Naive thymus-derived CD8-positive, alpha-beta T cell (primary cell): ENCODE measurements at regions of chr6 and their contacts with region 1.

Region 1: DNA sequence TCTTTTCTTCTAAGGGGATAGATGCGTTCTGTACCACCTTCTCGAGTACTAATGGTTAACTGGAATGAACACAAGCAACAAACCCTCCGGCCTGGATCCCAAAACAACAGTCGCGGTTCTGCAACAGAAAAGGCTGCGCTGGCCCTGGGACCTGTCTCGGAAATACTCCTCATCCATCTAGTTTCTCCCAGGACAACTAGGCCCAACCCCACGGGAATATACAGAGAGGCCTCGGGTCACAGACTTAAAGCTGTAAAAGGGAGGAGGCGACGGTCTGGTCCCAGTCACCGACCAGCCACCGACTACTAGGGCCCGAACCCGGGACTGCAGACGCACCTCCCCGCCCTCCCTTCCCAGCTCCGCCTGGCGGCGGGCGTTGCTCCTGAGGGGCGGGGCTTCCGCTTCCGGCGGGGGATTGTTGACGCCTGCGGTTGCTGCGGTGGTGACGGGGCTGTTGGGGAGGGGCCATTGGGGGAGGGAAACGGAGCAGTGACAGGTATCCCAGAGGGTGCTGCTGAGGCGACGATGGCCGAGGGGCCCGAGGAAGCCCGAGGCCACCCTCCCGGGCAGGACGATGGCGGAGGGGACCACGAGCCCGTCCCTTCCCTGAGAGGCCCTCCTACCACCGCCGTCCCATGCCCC is at the start of gene FAM8A1:
- DNase-seq: peak; percentile 89 to 97 (median 94)
- ATAC-seq: peak; percentile 83 to 87
- H3K4me3 Mint-ChIP-seq: peak within 1 kb of the TSS; percentile 88 to 96 (median 92)
- H3K27ac Mint-ChIP-seq: peak within 1 kb of the TSS; percentile 84 to 96 (median 92)
- H3K4me1 Mint-ChIP-seq: peaks cover 15 to 47% (median 39%) of the 10 kb centered on the region in 4 donors
- H3K27me3 Mint-ChIP-seq: no peaks in the 10 kb centered on the region
- polyA plus RNA-seq, gene FAM8A1: 4.8 to 5.6 (median 4.9) TPM

Region 2: DNA sequence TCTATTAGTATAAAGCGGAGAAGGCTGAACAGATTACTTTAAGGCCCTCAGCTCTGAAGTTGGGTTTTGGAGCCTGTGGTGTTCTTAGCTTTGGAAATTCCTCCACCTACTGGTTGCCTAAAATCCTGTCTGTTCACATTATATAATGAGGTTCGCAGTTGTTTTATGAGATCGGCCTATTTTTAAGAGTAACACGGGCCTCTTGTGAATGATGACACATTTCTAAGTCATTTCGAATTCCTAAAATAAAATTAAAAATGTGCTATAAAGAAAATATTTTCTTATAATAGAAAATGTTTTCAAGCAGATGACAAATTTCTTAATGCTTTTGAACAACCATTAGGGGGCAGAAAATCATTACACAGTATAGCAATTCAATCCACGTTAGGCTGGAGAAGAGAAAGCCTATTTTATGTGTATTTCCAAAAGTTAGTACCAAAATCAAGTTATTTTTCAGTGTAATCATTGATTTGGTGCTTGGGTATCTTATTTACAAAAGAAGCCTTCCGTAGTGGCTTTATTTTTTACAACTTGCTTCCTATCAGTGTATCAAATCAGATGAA is 15.7 kb before region 1 on chr6:
- POLR2A ChIA-PET with region 1: interaction called, 35 read pairs
- DNase-seq: peak in 4 of 10 donors; percentile 35 to 61 (median 57)
- ATAC-seq: peak; percentile 69 to 73
- H3K4me3 Mint-ChIP-seq: peak overlapping the region in 1 of 10 donors; percentile 5
- H3K27ac Mint-ChIP-seq: peak overlapping the region in 2 of 10 donors; percentile 0 to 50
- H3K4me1 Mint-ChIP-seq: peaks cover 7 to 16% (median 10%) of the 10 kb centered on the region in 4 donors
- H3K27me3 Mint-ChIP-seq: peaks cover 0 to 8% (median 0%) of the 10 kb centered on the region in 5 donors

Region 3: DNA sequence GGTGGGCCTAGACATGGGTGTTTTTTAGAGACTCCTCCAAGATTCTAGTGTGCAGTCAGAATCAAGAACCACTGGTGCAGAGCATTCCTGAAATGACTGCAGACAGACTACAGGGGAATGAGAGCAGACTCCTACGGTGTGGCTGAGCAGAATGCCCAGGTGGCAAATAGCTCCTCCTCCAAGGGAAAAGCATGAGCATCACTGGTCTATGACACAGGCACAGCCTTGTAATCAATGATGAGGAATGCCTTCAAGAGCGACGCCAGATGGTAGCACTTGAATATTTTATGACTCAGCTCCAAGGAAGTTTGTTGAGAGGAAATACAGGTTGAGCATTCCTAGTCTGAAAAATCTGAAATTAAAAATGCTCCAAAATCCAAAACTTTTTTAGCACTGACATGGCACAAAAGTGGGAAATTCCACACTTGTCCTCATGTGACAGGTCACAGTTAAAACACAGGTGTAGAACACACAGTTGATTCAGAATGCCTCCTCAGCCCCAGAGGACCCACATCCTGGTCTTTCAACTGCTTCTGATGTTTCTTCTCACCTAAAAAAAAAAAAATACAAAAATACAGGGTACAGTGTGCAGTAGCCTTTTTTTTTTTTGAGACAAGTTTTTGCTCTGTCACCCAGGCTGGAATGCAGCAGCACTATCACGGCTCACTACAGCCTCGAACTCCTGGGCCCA is 10.5 kb before region 1 on chr6:
- POLR2A ChIA-PET with region 1: interaction called, 35 read pairs
- DNase-seq: peak in 9 of 10 donors; percentile 9 to 76 (median 51)
- ATAC-seq: peak; percentile 98 to 99
- H3K4me3 Mint-ChIP-seq: peak overlapping the region in 8 of 10 donors; percentile 7 to 83 (median 39)
- H3K27ac Mint-ChIP-seq: peak overlapping the region in 9 of 10 donors; percentile 58 to 92 (median 84)
- H3K4me1 Mint-ChIP-seq: peaks cover 7 to 28% (median 17%) of the 10 kb centered on the region in 4 donors
- H3K27me3 Mint-ChIP-seq: no peaks in the 10 kb centered on the region

Region 4: DNA sequence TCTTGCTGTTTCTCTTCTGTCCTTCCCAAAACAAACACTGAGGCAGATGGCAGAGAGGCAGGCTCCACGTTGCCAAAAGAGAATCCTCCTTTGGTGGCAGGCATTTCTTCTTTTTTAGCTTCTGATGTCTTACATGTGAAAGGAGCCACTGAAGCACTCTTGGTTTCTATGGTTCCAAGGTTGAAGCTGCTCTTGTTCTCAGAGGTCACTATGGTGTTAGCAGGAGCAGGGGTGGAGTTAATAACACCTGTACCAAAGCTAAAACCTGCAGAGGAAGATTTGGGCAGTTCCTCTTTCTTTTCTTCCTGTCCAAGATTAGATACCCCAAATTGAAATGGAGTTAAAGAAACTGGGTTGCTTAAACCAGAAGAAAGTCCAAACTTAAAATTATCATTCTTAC is 28.9 kb after region 1 on chr6:
- POLR2A ChIA-PET with region 1: interaction called, 10 read pairs
- DNase-seq: no peak
- ATAC-seq: no peak
- H3K4me3 Mint-ChIP-seq: no peak overlapping the region
- H3K27ac Mint-ChIP-seq: peak overlapping the region in 7 of 10 donors; percentile 3 to 78 (median 50)
- H3K4me1 Mint-ChIP-seq: peaks cover 12 to 49% (median 44%) of the 10 kb centered on the region in 4 donors
- H3K27me3 Mint-ChIP-seq: no peaks in the 10 kb centered on the region

Region 5: GRCh38 chr6:17640477-17640917 is 40.5 kb after region 1 on chr6:
- POLR2A ChIA-PET with region 1: no interaction called
- DNase-seq: no peak
- ATAC-seq: no peak
- H3K4me3 Mint-ChIP-seq: no peak overlapping the region
- H3K27ac Mint-ChIP-seq: peak overlapping the region in 4 of 10 donors; percentile 26 to 71 (median 46)
- H3K4me1 Mint-ChIP-seq: peaks cover 3 to 13% (median 8%) of the 10 kb centered on the region in 4 donors
- H3K27me3 Mint-ChIP-seq: no peaks in the 10 kb centered on the region

Region 6: DNA sequence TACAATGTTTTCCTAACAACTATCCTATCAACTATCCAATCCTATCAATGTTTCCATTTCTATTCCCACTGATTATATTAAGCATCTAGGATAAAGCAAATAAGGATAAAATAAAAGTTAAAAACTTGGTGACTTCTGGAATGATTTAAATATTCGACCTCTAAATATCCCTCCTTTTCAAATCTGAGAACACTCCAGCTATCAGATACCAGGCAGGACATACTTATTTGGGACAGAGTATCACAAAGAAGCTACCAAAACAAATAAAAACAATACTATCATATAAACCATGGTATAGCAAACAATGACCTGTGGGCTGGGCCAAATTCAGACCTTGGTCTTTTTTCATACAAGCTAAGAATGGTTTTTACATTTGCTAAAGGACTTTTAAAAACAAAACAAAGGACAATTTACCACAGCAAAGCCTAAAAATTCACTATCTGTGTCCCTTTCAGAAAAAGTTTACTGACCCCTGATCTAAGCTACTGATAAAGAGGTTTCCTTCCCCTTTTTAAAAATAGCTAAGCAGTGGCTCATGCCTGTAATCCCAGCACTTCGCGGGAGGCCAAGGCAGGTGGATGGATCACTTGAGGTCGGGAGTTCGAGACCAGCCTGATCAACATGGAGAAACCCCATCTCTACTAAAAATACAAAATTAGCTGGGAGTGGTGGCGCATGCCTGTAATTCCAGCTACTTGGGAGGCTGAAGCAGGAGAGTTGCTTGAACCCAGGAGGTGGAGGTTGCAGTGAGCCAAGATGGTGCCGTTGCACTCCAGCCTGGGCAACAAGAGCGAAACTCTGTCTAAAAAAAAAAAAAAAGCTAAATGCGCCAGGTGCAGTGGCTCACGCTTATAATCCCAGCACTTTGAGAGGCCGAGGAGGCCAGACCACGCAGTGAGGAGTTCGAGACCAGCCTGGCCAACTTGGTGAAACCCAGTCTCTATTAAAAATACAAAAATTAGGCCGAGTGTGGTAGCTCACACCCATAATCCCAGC is 100.7 kb after region 1 on chr6:
- POLR2A ChIA-PET with region 1: interaction called, 35 read pairs
- DNase-seq: no peak
- ATAC-seq: no peak
- H3K4me3 Mint-ChIP-seq: peak overlapping the region in 8 of 10 donors; percentile 15 to 67 (median 25)
- H3K27ac Mint-ChIP-seq: peak overlapping the region in 9 of 10 donors; percentile 19 to 82 (median 73)
- H3K4me1 Mint-ChIP-seq: peaks cover 17 to 84% (median 52%) of the 10 kb centered on the region in 4 donors
- H3K27me3 Mint-ChIP-seq: no peaks in the 10 kb centered on the region

Region 7: DNA sequence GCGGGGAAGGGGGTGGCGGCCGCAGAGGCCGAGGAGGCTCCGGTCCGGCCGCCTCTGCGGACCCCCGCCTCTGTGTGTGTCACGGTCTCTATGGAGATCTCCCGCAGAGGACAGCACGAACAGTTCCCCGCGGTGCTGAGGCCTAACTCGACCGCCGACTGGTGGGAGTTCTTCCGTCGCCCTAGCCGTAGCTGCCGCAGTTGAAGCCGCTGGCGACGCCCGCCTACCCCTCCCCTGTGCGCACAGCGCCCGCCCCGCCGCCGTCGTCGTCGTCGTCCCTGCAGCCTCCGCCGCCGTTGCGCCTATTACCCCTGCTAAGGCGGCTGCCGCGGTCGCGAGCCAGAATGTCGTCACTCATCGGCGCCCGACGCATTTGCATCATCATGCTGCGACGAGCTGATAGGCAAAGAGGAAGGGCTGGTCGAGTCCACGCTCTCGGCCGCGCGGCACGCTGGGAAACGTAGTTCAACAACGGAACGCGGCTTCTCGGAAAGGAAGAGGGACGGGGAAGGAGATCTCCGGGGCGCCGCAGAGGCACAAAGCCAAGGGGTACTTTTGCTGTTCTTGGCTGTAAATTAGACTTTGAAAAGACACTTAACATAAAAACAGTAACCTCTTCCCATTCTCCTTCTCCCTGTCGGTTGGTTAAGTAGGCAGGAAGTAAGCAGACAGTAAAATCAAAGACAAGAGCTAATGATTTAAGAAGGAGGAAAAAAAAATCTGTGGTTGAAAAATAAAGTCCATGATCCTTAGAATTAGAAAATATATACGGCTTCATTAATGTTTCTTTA is 106.8 kb after region 1 on chr6 and contains the start of gene NUP153:
- POLR2A ChIA-PET with region 1: interaction called, 35 read pairs
- DNase-seq: peak; percentile 96 to 100 (median 100)
- ATAC-seq: peak; percentile 78 to 84
- H3K4me3 Mint-ChIP-seq: peak within 1 kb of the TSS; percentile 87 to 97 (median 92)
- H3K27ac Mint-ChIP-seq: peak within 1 kb of the TSS; percentile 91 to 99 (median 96)
- H3K4me1 Mint-ChIP-seq: peaks cover 12 to 51% (median 37%) of the 10 kb centered on the region in 4 donors
- H3K27me3 Mint-ChIP-seq: no peaks in the 10 kb centered on the region
- polyA plus RNA-seq, gene NUP153: 2.9 to 3.5 (median 3.3) TPM